ENCODE measurements at regions of chr3 and their contacts with region 1.

Region 1: DNA sequence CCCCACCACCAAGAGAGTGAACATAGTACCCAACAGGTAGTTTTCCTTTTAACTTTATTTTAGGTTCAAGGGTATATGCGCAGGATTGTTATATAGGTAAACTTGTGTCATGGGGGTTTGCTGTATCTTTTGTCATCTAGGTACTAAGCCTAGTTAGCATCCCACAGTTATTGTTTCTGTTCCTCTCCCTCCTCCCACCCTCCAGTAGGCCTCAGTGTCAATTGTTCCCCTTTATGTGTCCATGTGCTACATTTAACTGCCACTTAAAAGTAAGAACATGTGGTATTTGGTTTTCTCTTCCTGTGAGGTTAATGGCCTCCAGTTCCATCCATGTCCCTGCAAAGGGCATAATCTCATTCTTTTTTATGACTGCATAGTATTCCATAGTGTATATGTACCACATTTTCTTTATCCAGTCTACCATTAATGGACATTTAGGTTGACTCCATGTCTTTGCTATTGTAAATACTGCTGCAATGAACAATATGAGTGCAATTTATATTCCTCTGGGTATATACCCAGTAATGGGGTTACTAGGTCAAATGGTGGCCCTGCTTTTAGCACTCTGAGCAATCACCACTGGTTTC is 66.2 kb downstream of the ST3GAL6 start:
- DNase-seq: no peak
- ATAC-seq: peak; percentile 46
- H3K4me3 ChIP-seq: no peak overlapping the region
- H3K27ac ChIP-seq: no peak overlapping the region
- H3K4me1 ChIP-seq: peaks cover 4 to 29% of the 10 kb centered on the region in 2 experiments; a peak in 2 of 4 replicates
- H3K27me3 ChIP-seq: no peaks in the 10 kb centered on the region
- CTCF ChIP-seq: no peak
- POLR2A ChIP-seq: no peak
- RAD21 ChIP-seq: peak; percentile 8; the same call in 1 of the 2 replicates

Region 2: GRCh38 chr3:98801043-98801747 is 28.1 kb before region 1 on chr3:
- CTCF ChIA-PET with region 1: no interaction called
- POLR2A ChIA-PET with region 1: no interaction called
- RAD21 ChIA-PET with region 1: no interaction called
- intact Hi-C with region 1: no loop called
- DNase-seq: no peak
- ATAC-seq: peak; percentile 81
- H3K4me3 ChIP-seq: no peak overlapping the region
- H3K27ac ChIP-seq: no peak overlapping the region
- H3K4me1 ChIP-seq: no peaks in the 10 kb centered on the region
- H3K27me3 ChIP-seq: no peaks in the 10 kb centered on the region
- CTCF ChIP-seq: peak; percentile 14 to 55 (median 54); a peak in 4 of 6 replicates
- POLR2A ChIP-seq: no peak
- RAD21 ChIP-seq: peak; percentile 22; the same call in 1 of the 2 replicates

Region 3: GRCh38 chr3:98994128-98994762 is 164.9 kb after region 1 on chr3:
- CTCF ChIA-PET with region 1: interaction called, 10 read pairs
- POLR2A ChIA-PET with region 1: interaction called, 8 read pairs
- RAD21 ChIA-PET with region 1: no interaction called
- intact Hi-C with region 1: loop called (anchors 1 kb)
- DNase-seq: peak; percentile 52
- ATAC-seq: peak; percentile 78
- H3K4me3 ChIP-seq: no peak overlapping the region
- H3K27ac ChIP-seq: no peak overlapping the region
- H3K4me1 ChIP-seq: peaks cover 0 to 16% of the 10 kb centered on the region in 2 experiments; a peak in 1 of 4 replicates
- H3K27me3 ChIP-seq: no peaks in the 10 kb centered on the region
- CTCF ChIP-seq: peak; percentile 59 to 84 (median 66); a peak in 5 of 6 replicates
- POLR2A ChIP-seq: no peak
- RAD21 ChIP-seq: peak; percentile 87

Region 4: DNA sequence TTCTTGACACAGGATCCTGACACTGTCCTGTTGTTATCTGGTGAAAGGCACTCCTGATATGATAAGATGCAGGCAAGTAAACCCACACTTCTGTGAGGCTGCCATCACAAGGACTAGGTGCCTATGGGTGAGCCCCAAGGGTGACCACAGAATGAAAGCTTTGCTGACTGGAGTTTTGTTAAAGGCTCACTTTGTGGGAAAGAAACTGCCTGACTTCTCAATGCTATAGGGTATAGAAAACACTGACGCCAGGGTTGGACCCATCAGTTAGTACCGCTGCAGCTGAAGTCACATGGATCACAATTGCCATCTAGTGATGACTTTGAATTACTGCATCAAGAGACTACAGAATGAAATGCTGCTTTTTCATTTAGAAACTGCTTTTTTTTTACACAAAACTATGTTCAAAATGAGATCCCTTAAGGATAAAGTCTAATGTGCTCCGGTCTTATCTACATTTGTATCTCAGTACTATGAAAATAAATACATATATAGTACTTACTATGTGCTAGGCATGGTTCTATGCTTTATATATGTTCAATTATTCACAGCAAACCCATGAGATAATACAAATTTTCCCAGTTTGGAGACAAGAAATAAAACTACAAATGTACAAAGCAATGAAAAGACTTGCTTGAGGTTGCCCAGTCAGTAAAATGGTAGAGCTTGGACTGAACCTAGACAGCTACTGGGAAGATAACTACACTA is 924.1 kb after region 1 on chr3:
- CTCF ChIA-PET with region 1: no interaction called
- POLR2A ChIA-PET with region 1: no interaction called
- RAD21 ChIA-PET with region 1: no interaction called
- intact Hi-C with region 1: no loop called
- DNase-seq: peak; percentile 28
- ATAC-seq: peak; percentile 92
- H3K4me3 ChIP-seq: no peak overlapping the region
- H3K27ac ChIP-seq: no peak overlapping the region
- H3K4me1 ChIP-seq: no peaks in the 10 kb centered on the region
- H3K27me3 ChIP-seq: peaks cover 66% of the 10 kb centered on the region
- CTCF ChIP-seq: peak; percentile 37 to 76 (median 68); a peak in 5 of 6 replicates
- POLR2A ChIP-seq: no peak
- RAD21 ChIP-seq: peak; percentile 76